ENCODE measurements at regions of chr2 and their contacts with region 1.

Region 1: GRCh38 chr2:225002039-225002655 is 40.1 kb downstream of the DOCK10 start:
- DNase-seq: no peak
- H3K4me3 ChIP-seq: no peak overlapping the region
- H3K27ac ChIP-seq: no peak overlapping the region
- H3K4me1 ChIP-seq: peaks cover 28% of the 10 kb centered on the region
- H3K27me3 ChIP-seq: no peaks in the 10 kb centered on the region
- CTCF ChIP-seq: peak; percentile 67 to 82 (median 75)
- POLR2A ChIP-seq: no peak

Region 2: DNA sequence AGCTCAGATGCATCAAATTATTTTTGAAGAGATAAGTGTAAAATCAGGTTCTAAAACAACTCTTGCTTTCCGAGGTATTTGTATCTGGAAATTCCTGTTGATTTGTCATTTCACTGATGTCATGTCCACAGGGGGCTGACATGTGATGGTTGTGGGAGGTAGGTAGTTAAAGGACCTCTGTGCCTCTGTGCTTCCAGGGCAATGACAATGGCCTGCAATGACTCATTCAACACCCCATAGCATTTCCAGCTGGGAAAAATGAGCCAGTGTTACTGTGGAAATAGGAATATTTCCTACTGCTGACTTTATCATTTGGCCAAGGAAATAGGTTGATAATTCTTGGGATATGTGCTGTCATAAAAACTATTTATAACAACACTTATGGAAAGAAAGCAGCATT is 199.7 kb before region 1 on chr2:
- intact Hi-C with region 1: loop called (anchors 10 kb)
- DNase-seq: no peak
- H3K4me3 ChIP-seq: no peak overlapping the region
- H3K27ac ChIP-seq: no peak overlapping the region
- H3K4me1 ChIP-seq: peaks cover 10% of the 10 kb centered on the region
- H3K27me3 ChIP-seq: no peaks in the 10 kb centered on the region
- CTCF ChIP-seq: no peak
- POLR2A ChIP-seq: no peak